ENCODE measurements at regions of chr21 and their contacts with region 1.

Region 1: DNA sequence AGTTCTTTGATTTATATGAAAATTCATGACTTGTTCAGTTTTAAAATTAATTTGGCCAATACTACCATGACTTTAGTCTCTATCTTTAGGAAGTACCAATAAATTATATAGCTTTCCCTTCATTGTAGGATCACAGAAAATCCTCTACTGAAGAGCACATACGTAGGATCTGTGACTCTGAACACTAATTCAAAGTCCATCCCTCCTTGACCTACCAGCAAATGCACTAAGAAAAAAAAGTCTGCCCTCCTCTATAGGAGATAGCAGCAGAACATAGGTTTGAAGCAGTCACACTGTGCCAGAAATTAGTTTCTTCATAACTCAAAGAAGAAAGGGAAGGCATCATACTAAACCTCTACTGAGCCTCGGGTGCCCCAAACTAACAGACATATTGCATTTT is 16.5 kb downstream of the BRWD1 start:
- DNase-seq: no peak
- ATAC-seq: no peak
- H3K4me3 ChIP-seq: no peak overlapping the region
- H3K27ac ChIP-seq: no peak overlapping the region
- H3K4me1 ChIP-seq: peaks cover 0 to 13% (median 0%) of the 10 kb centered on the region in 12 donors
- H3K27me3 ChIP-seq: no peaks in the 10 kb centered on the region
- CTCF ChIP-seq: no peak
- POLR2A ChIP-seq: no peak

Region 2: DNA sequence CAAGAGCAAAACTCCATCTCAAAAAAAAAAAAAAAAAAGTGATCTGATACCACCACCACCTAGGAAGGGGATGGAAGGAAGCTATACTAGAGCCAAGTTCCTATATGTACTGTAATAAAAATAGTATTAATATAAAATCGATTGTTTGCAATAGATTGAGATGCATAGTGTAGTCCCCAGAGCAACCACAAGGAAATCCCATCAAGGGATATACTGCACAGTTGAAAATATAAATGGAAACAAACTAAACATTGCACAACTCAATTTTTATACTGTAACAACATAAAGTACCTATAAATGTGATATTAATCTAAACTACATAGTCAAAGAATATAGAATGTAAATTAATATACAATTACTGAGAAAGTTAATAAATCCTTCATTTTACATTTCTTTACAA is 92.8 kb before region 1 on chr21:
- intact Hi-C with region 1: loop called in 1 of 10 experiments (anchors 10 kb)
- DNase-seq: no peak
- ATAC-seq: no peak
- H3K4me3 ChIP-seq: no peak overlapping the region
- H3K27ac ChIP-seq: no peak overlapping the region
- H3K4me1 ChIP-seq: no peaks in the 10 kb centered on the region
- H3K27me3 ChIP-seq: no peaks in the 10 kb centered on the region
- CTCF ChIP-seq: peak in 2 of 12 donors; percentile 21 to 27
- POLR2A ChIP-seq: no peak

Region 3: DNA sequence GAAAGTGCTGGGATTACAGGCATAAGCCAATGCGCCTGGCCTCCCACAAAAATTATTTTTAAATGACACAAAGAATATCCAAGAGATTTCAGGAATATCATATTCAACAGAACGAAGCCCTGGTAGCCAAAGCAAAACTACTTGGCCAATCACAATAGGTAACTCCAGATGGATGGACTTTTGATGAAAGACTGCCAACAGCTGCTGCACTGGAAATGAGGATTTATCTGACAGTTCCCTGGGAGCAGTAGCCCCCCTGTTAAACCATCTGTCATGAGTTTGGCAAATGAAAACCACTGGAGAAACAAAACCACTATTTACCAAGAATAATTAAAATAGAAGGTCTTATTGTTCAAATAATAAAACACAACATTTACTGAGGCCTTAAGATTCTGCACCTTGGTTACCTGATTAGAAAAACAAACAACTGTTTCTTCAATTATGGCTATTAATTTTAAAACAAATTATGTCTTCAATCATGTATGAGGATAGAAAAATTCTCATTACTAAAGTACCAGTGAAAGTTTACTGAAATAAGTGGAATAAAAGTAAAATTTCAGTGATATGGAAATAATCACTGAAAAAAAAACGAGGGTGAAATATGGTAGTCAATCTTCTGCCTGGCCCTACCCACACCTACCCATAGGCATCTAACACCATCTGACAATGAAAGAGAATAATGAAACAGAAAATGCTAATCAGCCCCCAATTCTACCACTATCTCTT is 79.4 kb before region 1 on chr21:
- intact Hi-C with region 1: no loop called
- DNase-seq: no peak
- ATAC-seq: no peak
- H3K4me3 ChIP-seq: no peak overlapping the region
- H3K27ac ChIP-seq: no peak overlapping the region
- H3K4me1 ChIP-seq: peaks cover 0 to 5% (median 0%) of the 10 kb centered on the region in 12 donors
- H3K27me3 ChIP-seq: no peaks in the 10 kb centered on the region
- CTCF ChIP-seq: no peak
- POLR2A ChIP-seq: no peak